Astrocyte of the cerebellum (primary cell): ENCODE measurements at regions of chr20 and their contacts with region 1.

Region 1: DNA sequence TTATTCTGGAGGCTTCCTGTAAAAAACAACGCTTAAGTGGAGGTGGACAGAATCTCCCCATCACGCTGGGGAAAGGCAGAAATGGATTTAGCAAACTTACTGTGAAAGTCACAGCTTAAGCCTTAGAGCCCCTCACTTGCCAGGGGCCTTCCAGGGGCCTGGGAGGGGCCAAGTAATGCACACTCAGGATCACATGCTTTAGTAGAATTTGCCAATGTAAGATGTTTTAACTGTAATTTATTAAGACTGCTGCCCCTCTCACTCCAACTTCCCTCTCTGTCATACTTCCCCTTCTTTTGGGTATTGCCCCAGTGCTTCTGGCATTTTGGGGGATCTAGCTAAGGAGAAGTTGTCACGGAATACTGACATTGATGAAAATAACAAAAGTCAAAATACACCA is 12.6 kb upstream of the ADA start:
- DNase-seq: no peak
- H3K4me3 ChIP-seq: no peak overlapping the region
- CTCF ChIP-seq: no peak

Region 2: GRCh38 chr20:44609511-44610312 is 54.4 kb before region 1 on chr20:
- in situ Hi-C with region 1: no loop called
- DNase-seq: peak; percentile 49
- H3K4me3 ChIP-seq: no peak overlapping the region
- CTCF ChIP-seq: peak; percentile 99

Region 3: DNA sequence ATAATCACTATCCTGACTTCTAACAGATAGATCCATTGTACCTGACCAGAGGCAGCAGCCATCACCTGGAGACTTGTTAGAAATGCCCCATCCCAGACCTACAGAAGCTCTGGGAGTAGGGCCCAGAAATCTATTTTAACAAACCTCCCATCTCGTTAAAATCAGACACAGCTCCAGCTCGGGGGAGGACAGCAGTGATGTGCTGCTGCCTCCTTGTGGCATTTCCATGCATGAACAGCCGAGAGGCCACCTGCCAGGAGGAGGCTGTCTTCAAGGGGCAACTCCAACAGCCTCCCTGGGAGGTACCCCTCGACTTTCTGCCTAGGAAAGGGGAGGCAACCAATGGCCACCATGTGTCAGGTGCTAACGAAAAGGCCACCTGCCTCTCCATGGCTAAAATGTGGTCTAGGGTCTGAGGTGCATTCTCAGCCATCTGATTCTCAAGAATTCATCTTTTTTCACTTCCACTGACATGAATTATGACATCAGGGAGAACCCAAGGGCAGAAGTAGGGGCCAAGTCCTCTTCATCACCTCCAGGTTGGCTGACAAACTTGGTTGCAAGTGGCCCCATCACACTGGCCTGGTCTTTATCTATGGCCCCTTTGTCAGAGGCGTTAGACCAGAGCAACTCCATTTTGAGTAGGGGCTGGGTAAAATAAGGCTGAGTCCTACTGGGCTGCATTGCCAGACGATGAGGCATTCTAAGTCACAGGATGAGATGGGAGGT is 69.4 kb after region 1 on chr20:
- in situ Hi-C with region 1: loop called (anchors 10 kb)
- DNase-seq: peak; percentile 49
- H3K4me3 ChIP-seq: no peak overlapping the region
- CTCF ChIP-seq: peak; percentile 95